Mammary epithelial cell (primary cell): ENCODE measurements at regions of chr2 and their contacts with region 1.

Region 1: DNA sequence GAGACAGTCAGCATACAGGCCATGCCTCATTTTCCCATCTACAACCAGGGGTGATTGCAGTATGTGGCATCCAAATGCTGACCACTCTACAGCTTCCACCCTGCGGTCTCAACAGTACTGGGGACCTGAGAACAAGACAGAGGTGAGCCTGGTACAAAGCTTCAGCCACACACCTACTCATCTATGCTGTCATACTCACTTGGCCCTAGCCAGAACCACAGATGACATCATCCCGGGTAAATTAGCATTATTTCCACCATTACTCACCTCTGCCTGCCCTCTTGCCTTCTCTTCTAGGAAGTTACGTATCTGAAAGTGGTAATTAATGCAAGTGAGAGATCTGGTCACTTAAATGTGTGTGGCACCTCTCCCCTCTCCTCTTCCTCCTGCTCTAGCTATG is 208.2 kb upstream of the ARL4C start:
- DNase-seq: peak; percentile 73
- H3K4me3 ChIP-seq: no peak overlapping the region
- H3K27ac ChIP-seq: no peak overlapping the region
- H3K4me1 ChIP-seq: peaks cover 10% of the 10 kb centered on the region
- H3K27me3 ChIP-seq: no peaks in the 10 kb centered on the region
- CTCF ChIP-seq: no peak

Region 2: GRCh38 chr2:234674781-234675201 is 30.3 kb before region 1 on chr2:
- CTCF ChIA-PET with region 1: no interaction called
- dilution Hi-C with region 1: loop called (anchors 5 kb)
- in situ Hi-C with region 1: no loop called
- intact Hi-C with region 1: no loop called
- DNase-seq: peak; percentile 23
- H3K4me3 ChIP-seq: no peak overlapping the region
- H3K27ac ChIP-seq: no peak overlapping the region
- H3K4me1 ChIP-seq: peaks cover 48% of the 10 kb centered on the region
- H3K27me3 ChIP-seq: no peaks in the 10 kb centered on the region
- CTCF ChIP-seq: no peak